Activated CD4-positive, alpha-beta memory T cell treated with anti-CD3 and anti-CD28 coated beads for 36 hours (primary cell): ENCODE measurements at regions of chr3 and their contacts with region 1.

Region 1: DNA sequence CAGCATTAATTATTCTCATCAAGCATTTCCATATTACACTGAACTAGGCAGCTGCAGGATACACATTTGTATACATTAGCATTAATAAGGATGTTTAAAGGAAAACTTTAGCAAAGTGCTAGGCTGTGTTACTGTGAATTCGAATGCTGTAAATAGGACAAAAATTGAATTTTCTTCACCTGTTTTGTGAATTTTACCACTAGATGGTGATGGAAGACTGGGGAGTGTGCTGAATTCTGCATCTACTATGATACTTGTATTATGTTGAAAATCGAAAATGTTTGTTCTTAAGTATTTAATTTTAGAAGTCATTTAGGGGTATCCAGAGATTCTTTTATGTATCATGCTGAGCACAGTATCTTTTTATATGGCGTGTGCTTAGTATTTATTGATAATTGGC is 12.3 kb upstream of the P2RY14 start:
- DNase-seq: no peak
- H3K4me3 Mint-ChIP-seq: no peak overlapping the region
- H3K27ac Mint-ChIP-seq: no peak overlapping the region
- H3K4me1 Mint-ChIP-seq: no peaks in the 10 kb centered on the region
- H3K27me3 Mint-ChIP-seq: peaks cover 9% of the 10 kb centered on the region

Region 2: GRCh38 chr3:151327571-151328198 is 37.0 kb after region 1 on chr3:
- CTCF ChIA-PET with region 1: interaction called, 13 read pairs
- POLR2A ChIA-PET with region 1: no interaction called
- intact Hi-C with region 1: loop called (anchors 1 kb)
- DNase-seq: no peak
- H3K4me3 Mint-ChIP-seq: no peak overlapping the region
- H3K27ac Mint-ChIP-seq: no peak overlapping the region
- H3K4me1 Mint-ChIP-seq: peaks cover 11% of the 10 kb centered on the region
- H3K27me3 Mint-ChIP-seq: peaks cover 13% of the 10 kb centered on the region